ENCODE measurements at regions of chr3 and their contacts with region 1.

Region 1: DNA sequence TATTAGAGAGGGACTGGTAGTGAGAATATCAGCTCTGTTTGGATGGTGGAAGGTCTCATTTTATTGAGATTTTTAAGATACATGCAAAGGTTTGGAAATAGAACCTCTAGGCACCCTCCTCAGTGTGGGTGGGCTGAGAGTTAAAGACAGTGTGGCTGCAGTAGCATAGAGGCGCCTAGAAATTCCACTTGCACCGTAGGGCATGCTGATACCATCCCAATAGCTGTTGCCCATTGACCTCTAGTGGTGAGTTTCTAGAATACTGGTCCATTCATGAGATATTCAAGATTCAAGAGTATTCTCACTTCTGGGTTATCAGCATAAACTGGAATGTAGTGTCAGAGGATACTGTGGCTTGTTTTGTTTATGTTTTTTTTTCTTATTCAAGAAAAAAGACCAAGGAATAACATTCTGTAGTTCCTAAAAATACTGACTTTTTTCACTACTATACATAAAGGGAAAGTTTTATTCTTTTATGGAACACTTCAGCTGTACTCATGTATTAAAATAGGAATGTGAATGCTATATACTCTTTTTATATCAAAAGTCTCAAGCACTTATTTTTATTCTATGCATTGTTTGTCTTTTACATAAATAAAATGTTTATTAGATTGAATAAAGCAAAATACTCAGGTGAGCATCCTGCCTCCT is 87.2 kb downstream of the TGFBR2 start:
- DNase-seq: no peak
- H3K4me3 ChIP-seq: no peak overlapping the region
- H3K27ac ChIP-seq: peak overlapping the region in 6 of 8 donors; percentile 74 to 80 (median 75)
- H3K4me1 ChIP-seq: peaks cover 35 to 89% (median 77%) of the 10 kb centered on the region in 6 donors
- H3K27me3 ChIP-seq: no peaks in the 10 kb centered on the region
- CTCF ChIP-seq: peak; percentile 57 to 86 (median 79)
- POLR2A ChIP-seq: no peak

Region 2: GRCh38 chr3:30112902-30113484 is 580.6 kb before region 1 on chr3:
- intact Hi-C with region 1: loop called (anchors 5 kb)
- DNase-seq: no peak
- H3K4me3 ChIP-seq: no peak overlapping the region
- H3K27ac ChIP-seq: no peak overlapping the region
- H3K4me1 ChIP-seq: peaks cover 0 to 11% (median 8%) of the 10 kb centered on the region in 6 donors
- H3K27me3 ChIP-seq: peaks cover 0 to 8% (median 0%) of the 10 kb centered on the region in 7 donors
- CTCF ChIP-seq: peak in 10 of 11 experiments; percentile 23 to 66 (median 54)
- POLR2A ChIP-seq: no peak